B cell (primary cell): ENCODE measurements at regions of chr1 and their contacts with region 1.

Region 1: GRCh38 chr1:85200870-85201339 is at the start of gene SYDE2:
- DNase-seq: peak; percentile 86
- ATAC-seq: peak; percentile 83
- H3K4me3 ChIP-seq: peak within 1 kb of the TSS; percentile 46 to 73 (median 62)
- H3K4me3 Mint-ChIP-seq: peak within 1 kb of the TSS; percentile 98
- H3K27ac ChIP-seq: peak within 1 kb of the TSS in 1 of 2 donors; percentile 85
- H3K27ac Mint-ChIP-seq: peak within 1 kb of the TSS; percentile 93
- H3K4me1 ChIP-seq: peaks cover 16 to 26% of the 10 kb centered on the region in 2 donors
- H3K4me1 Mint-ChIP-seq: peaks cover 15% of the 10 kb centered on the region
- H3K27me3 ChIP-seq: peaks cover 0 to 35% (median 25%) of the 10 kb centered on the region in 4 experiments
- H3K27me3 Mint-ChIP-seq: peaks cover 42% of the 10 kb centered on the region
- CTCF ChIP-seq: no peak
- total RNA-seq, gene SYDE2: 0.89 and 1.0 TPM in 2 replicates

Region 2: DNA sequence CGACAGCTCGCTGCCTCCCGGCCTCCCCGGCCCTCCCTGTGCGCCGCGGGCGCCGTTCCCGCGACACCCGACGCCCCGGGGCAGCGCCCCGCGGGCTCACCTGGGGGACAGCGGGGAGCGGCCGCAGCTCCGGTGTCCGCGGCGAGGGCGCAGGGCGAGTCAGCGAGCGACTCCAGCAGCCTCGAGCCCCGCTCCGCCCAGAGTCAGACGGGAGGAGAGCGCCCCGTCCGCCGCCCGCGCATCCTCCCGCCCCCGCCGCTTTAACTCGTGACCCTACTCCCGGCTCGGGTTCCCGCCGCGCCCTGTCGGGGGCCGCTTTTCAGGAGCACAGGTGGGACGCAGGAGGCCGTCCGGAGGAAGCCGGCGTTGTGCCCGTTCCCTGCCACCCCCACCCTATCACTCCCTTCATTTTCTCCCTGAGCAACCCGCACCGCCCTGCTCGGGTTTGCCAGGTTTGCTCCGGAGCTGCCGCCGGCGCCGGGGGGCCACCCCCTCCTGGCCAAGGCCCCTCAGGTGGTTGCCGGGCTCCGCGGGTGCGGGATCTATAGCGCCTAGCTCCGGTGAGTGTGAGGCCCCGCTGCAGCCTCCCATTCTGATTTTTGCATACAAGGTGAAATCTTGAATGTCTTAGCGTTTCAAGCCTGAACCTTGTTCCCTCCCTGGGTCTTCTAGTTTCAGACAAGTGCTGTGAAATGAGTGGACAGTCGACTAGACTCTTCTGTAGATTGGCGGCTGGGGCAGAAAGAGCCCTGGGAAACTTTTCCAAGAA is 152.4 kb before region 1 on chr1 and contains the start of gene MCOLN3:
- CTCF ChIA-PET with region 1: no interaction called
- POLR2A ChIA-PET with region 1: no interaction called
- intact Hi-C with region 1: loop called (anchors 5 kb)
- DNase-seq: peak; percentile 64
- ATAC-seq: peak; percentile 70
- H3K4me3 ChIP-seq: peak within 1 kb of the TSS in 4 of 5 experiments; percentile 39 to 69 (median 53)
- H3K4me3 Mint-ChIP-seq: peak within 1 kb of the TSS; percentile 87
- H3K27ac ChIP-seq: no peak within 1 kb of the TSS
- H3K27ac Mint-ChIP-seq: no peak within 1 kb of the TSS
- H3K4me1 ChIP-seq: peaks cover 14 to 19% of the 10 kb centered on the region in 2 donors
- H3K4me1 Mint-ChIP-seq: peaks cover 14% of the 10 kb centered on the region
- H3K27me3 ChIP-seq: peaks cover 0 to 36% (median 35%) of the 10 kb centered on the region in 4 experiments
- H3K27me3 Mint-ChIP-seq: peaks cover 51% of the 10 kb centered on the region
- CTCF ChIP-seq: no peak
- total RNA-seq, gene MCOLN3: 0.10 TPM in 1 of 2 replicates, not detected in the other

Region 3: GRCh38 chr1:85061711-85062424 is 139.0 kb before region 1 on chr1:
- CTCF ChIA-PET with region 1: no interaction called
- POLR2A ChIA-PET with region 1: no interaction called
- intact Hi-C with region 1: loop called (anchors 5 kb)
- DNase-seq: peak; percentile 94
- ATAC-seq: peak; percentile 99
- H3K4me3 ChIP-seq: peak overlapping the region in 4 of 5 experiments; percentile 45 to 67 (median 55)
- H3K4me3 Mint-ChIP-seq: peak overlapping the region; percentile 92
- H3K27ac ChIP-seq: no peak overlapping the region
- H3K27ac Mint-ChIP-seq: peak overlapping the region; percentile 87
- H3K4me1 ChIP-seq: peaks cover 10 to 13% of the 10 kb centered on the region in 2 donors
- H3K4me1 Mint-ChIP-seq: peaks cover 18% of the 10 kb centered on the region
- H3K27me3 ChIP-seq: peaks cover 0 to 3% (median 0%) of the 10 kb centered on the region in 4 experiments
- H3K27me3 Mint-ChIP-seq: peaks cover 16% of the 10 kb centered on the region
- CTCF ChIP-seq: no peak

Region 4: GRCh38 chr1:85214657-85215056 is 13.8 kb after region 1 on chr1:
- CTCF ChIA-PET with region 1: no interaction called
- POLR2A ChIA-PET with region 1: no interaction called
- intact Hi-C with region 1: no loop called
- DNase-seq: no peak
- ATAC-seq: no peak
- H3K4me3 ChIP-seq: no peak overlapping the region
- H3K4me3 Mint-ChIP-seq: no peak overlapping the region
- H3K27ac ChIP-seq: no peak overlapping the region
- H3K27ac Mint-ChIP-seq: no peak overlapping the region
- H3K4me1 ChIP-seq: no peaks in the 10 kb centered on the region
- H3K4me1 Mint-ChIP-seq: no peaks in the 10 kb centered on the region
- H3K27me3 ChIP-seq: peaks cover 0 to 14% (median 8%) of the 10 kb centered on the region in 4 experiments
- H3K27me3 Mint-ChIP-seq: peaks cover 55% of the 10 kb centered on the region
- CTCF ChIP-seq: no peak

Region 5: GRCh38 chr1:85230305-85230980 is 29.5 kb after region 1 on chr1:
- CTCF ChIA-PET with region 1: no interaction called
- POLR2A ChIA-PET with region 1: no interaction called
- intact Hi-C with region 1: no loop called
- DNase-seq: no peak
- ATAC-seq: peak; percentile 41
- H3K4me3 ChIP-seq: no peak overlapping the region
- H3K4me3 Mint-ChIP-seq: no peak overlapping the region
- H3K27ac ChIP-seq: no peak overlapping the region
- H3K27ac Mint-ChIP-seq: no peak overlapping the region
- H3K4me1 ChIP-seq: no peaks in the 10 kb centered on the region
- H3K4me1 Mint-ChIP-seq: no peaks in the 10 kb centered on the region
- H3K27me3 ChIP-seq: peaks cover 0 to 2% (median 0%) of the 10 kb centered on the region in 4 experiments
- H3K27me3 Mint-ChIP-seq: peaks cover 20% of the 10 kb centered on the region
- CTCF ChIP-seq: peak; percentile 12

Region 6: GRCh38 chr1:85494904-85495266 is 294.0 kb after region 1 on chr1:
- CTCF ChIA-PET with region 1: no interaction called
- POLR2A ChIA-PET with region 1: no interaction called
- intact Hi-C with region 1: no loop called
- DNase-seq: no peak
- ATAC-seq: no peak
- H3K4me3 ChIP-seq: no peak overlapping the region
- H3K4me3 Mint-ChIP-seq: no peak overlapping the region
- H3K27ac ChIP-seq: no peak overlapping the region
- H3K27ac Mint-ChIP-seq: no peak overlapping the region
- H3K4me1 ChIP-seq: no peaks in the 10 kb centered on the region
- H3K4me1 Mint-ChIP-seq: no peaks in the 10 kb centered on the region
- H3K27me3 ChIP-seq: no peaks in the 10 kb centered on the region
- H3K27me3 Mint-ChIP-seq: peaks cover 9% of the 10 kb centered on the region
- CTCF ChIP-seq: no peak

Region 7: GRCh38 chr1:85707990-85708828 is 507.3 kb after region 1 on chr1 and contains the start of gene ZNHIT6:
- CTCF ChIA-PET with region 1: no interaction called
- POLR2A ChIA-PET with region 1: no interaction called
- intact Hi-C with region 1: loop called (anchors 5 kb)
- DNase-seq: peak; percentile 92
- ATAC-seq: peak; percentile 95
- H3K4me3 ChIP-seq: peak within 1 kb of the TSS; percentile 76 to 99 (median 91)
- H3K4me3 Mint-ChIP-seq: no peak within 1 kb of the TSS
- H3K27ac ChIP-seq: peak within 1 kb of the TSS; percentile 73
- H3K27ac Mint-ChIP-seq: no peak within 1 kb of the TSS
- H3K4me1 ChIP-seq: peaks cover 16 to 22% of the 10 kb centered on the region in 2 donors
- H3K4me1 Mint-ChIP-seq: peaks cover 16% of the 10 kb centered on the region
- H3K27me3 ChIP-seq: peaks cover 0 to under 1% (median 0%) of the 10 kb centered on the region in 4 experiments
- H3K27me3 Mint-ChIP-seq: no peaks in the 10 kb centered on the region
- CTCF ChIP-seq: peak; percentile 27
- total RNA-seq, gene ZNHIT6: 16.3 and 17.3 TPM in 2 replicates